OCI-LY7 (cell line): ENCODE measurements at regions of chr16 and their contacts with region 1.

Region 1: GRCh38 chr16:51262428-51262827 is 111.4 kb upstream of the SALL1 start:
- DNase-seq: no peak
- H3K4me3 ChIP-seq: no peak overlapping the region
- H3K27ac ChIP-seq: no peak overlapping the region
- H3K4me1 ChIP-seq: no peaks in the 10 kb centered on the region
- CTCF ChIP-seq: no peak

Region 2: DNA sequence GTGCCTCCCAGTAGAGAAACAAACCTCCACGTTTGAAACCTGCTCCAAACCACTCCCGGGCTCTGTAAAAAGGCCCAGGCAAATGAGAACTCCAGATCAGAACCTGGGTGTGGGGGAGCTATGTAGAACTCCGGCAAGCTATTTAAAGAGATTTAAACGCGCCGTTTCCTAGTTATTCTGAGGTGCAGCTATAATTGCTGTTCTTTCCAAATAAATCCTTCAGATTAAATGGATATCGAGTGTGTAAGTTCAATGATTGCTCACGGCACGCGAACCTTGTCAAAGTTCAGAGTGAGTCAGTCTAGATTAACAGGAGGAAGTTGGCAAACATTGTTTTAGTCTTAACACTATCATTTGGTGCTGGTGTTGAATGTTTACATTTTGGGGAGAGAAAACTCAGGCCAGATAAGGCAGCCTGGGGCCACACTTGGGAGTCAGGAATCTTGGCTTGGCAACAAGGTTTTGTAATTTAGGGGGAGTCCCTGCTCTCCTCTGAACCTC is 18.4 kb before region 1 on chr16:
- CTCF ChIA-PET with region 1: no interaction called
- POLR2A ChIA-PET with region 1: no interaction called
- intact Hi-C with region 1: no loop called
- DNase-seq: no peak
- H3K4me3 ChIP-seq: no peak overlapping the region
- H3K27ac ChIP-seq: no peak overlapping the region
- H3K4me1 ChIP-seq: no peaks in the 10 kb centered on the region
- CTCF ChIP-seq: no peak

Region 3: DNA sequence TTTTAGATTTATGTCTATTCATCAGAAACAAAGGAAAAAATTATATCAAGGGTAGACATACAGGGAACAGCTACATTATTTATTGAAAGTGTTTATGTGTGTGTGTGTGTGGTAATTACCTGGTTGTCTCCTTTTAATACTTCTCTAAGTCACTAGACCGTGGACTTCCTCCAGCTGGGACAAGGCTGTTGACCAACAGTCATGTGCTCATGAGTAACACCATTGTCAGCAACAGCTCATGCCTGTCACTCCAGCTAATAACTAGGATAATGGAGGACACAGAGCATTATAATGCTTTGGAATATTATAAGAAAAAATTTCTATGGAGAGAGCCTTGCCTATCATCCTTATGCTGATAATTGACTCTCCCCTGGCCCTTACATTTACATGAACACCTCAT is 13.9 kb after region 1 on chr16:
- CTCF ChIA-PET with region 1: interaction called, 13 read pairs
- POLR2A ChIA-PET with region 1: no interaction called
- intact Hi-C with region 1: no loop called
- DNase-seq: no peak
- H3K4me3 ChIP-seq: no peak overlapping the region
- H3K27ac ChIP-seq: no peak overlapping the region
- H3K4me1 ChIP-seq: no peaks in the 10 kb centered on the region
- CTCF ChIP-seq: no peak